GM10248 (cell line): ENCODE measurements at regions of chr16 and their contacts with region 1.

Region 1: GRCh38 chr16:46961373-46962353 is 11.8 kb downstream of the DNAJA2 start:
- DNase-seq: no peak
- CTCF ChIP-seq: no peak

Region 2: DNA sequence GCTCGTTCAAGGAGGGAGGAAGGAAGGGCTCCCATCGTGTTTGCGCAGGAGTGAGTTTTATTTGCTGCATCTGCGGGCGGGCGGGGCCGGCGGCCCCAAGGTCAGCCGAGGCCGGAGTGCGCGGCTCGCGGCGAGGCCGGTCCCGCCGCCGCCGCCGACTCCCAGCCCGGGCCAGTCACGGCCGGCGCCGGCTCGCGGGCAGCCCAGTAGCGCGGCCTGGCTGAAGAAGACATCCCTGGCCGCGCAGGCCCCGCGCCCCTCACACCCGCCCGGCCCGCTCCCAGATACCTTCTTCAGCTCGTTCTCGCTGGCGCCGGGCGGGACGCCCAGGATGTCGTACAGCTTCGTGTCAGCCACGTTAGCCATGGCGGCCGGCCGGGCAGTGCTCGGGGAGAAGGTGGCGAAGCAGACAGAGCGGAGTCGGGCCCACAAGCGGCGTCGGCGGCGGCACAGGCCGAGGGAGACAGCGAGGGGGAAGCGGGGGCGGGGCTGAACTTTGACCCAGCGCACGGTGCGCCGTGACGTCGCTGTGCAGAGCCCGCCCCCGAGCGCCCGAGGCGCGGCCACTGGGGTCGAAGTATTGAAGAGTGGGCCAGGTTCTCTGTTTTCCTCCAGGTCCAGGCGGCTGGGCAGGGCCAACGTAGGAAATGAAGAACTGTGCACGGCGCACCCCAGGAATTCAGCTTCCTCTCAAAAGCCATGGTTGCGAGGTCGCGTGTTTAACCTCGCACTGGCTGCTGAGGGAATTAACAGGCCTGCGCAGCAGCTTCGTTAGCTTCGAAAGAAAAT is 11.7 kb after region 1 on chr16 and contains the start of gene DNAJA2:
- CTCF ChIA-PET with region 1: interaction called, 21 read pairs
- POLR2A ChIA-PET with region 1: no interaction called
- DNase-seq: peak; percentile 93
- CTCF ChIP-seq: no peak